ENCODE measurements at regions of chr2 and their contacts with region 1.

Region 1: DNA sequence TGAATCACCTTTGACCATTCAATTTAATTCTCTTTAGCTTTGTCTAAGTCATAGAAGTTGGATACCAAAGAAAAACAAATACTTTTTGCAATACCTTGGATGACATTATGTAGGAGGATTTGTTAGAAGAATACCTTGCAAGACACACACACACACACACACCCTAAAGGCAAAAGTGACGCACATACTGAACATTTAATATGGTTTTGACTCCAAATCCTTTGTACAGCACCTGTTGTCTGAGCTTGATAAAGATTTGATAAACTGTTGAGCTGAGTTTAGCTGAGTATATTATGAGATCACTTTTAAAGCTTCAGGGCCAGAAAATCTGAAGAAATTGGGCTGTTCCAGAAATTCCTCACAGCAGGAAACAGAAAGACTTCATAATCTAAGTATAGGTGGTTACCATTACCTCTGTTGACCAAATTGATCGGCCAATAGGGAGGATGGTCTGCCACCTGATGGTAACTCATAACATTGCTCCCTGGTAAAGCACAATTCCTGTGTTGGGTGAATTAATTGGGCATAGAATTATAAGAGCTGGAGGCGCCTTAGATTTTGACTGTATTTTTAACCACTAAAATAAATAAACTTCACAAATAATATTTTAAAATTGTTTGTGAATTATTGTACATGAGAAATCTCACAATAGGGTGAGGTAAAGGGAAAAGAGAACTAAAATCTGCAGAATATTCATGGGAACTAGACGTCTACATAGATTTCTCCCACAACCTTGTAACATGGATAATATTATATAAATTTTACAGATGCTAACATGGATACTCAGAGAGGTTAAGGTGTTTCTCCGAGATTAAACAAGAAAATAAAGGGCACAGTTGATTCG is 21.9 kb upstream of the RPIA start:
- DNase-seq: no peak
- H3K4me3 ChIP-seq: no peak overlapping the region
- H3K27ac ChIP-seq: no peak overlapping the region
- H3K4me1 ChIP-seq: no peaks in the 10 kb centered on the region; a peak in 1 of 7 replicates
- H3K27me3 ChIP-seq: no peaks in the 10 kb centered on the region
- CTCF ChIP-seq: peak in 2 of 3 experiments; percentile 76 to 78; a peak in 3 of 4 replicates
- EP300 ChIP-seq: no peak
- POLR2A ChIP-seq: no peak
- RAD21 ChIP-seq: peak; percentile 86 to 92

Region 2: GRCh38 chr2:88590998-88591613 is 78.5 kb before region 1 on chr2:
- CTCF ChIA-PET with region 1: interaction called, 306 read pairs
- POLR2A ChIA-PET with region 1: no interaction called
- DNase-seq: no peak
- H3K4me3 ChIP-seq: no peak overlapping the region
- H3K27ac ChIP-seq: no peak overlapping the region
- H3K4me1 ChIP-seq: no peaks in the 10 kb centered on the region
- H3K27me3 ChIP-seq: no peaks in the 10 kb centered on the region
- CTCF ChIP-seq: peak in 2 of 3 experiments; percentile 78 to 83; a peak in 3 of 4 replicates
- EP300 ChIP-seq: no peak
- POLR2A ChIP-seq: no peak
- RAD21 ChIP-seq: peak; percentile 90

Region 3: DNA sequence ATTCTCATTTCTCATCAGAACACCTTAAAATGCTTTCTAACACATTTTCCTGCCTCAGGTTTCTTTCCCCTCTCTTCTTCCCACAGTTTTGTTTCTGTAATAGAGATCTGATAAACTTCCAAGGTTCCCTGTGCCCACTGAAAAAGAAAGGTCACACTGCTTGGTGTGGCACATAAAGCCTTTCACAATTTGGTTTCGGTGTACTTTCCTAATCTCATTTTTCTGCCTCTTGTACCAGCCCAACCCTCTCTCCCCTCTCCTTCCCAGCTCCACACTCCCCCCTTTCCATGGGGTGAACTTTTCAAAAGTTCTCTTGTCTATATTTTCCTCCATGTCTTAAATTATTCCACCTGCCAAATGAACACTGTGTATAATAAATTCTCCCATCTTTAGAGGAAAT is 49.6 kb before region 1 on chr2:
- CTCF ChIA-PET with region 1: interaction called, 45 read pairs
- POLR2A ChIA-PET with region 1: interaction called, 3 read pairs
- DNase-seq: no peak
- H3K4me3 ChIP-seq: no peak overlapping the region
- H3K27ac ChIP-seq: no peak overlapping the region
- H3K4me1 ChIP-seq: peaks cover 0 to 10% (median 8%) of the 10 kb centered on the region in 4 experiments; a peak in 4 of 7 replicates
- H3K27me3 ChIP-seq: no peaks in the 10 kb centered on the region
- CTCF ChIP-seq: no peak
- EP300 ChIP-seq: no peak
- POLR2A ChIP-seq: no peak
- RAD21 ChIP-seq: no peak

Region 4: DNA sequence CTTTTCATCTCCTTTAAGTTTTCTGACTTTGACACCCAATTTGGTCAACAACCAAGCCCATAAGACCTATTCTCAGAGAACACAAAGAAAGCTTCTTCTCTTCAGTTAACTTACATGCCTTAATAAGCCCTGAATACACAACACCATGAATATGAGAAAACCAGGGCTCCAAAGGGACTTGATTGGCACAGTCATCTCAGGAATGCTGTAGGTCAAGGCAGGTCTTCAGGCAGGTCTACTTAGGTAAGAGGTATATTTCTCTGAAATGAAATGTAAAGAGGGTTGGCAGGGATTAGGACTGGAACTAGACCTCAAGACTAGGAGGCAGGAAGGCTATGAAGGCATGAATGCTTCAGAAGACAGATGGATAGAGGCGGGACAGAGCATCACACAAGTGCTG is 17.9 kb before region 1 on chr2:
- CTCF ChIA-PET with region 1: interaction called, 102 read pairs
- POLR2A ChIA-PET with region 1: no interaction called
- DNase-seq: no peak
- H3K4me3 ChIP-seq: no peak overlapping the region
- H3K27ac ChIP-seq: no peak overlapping the region
- H3K4me1 ChIP-seq: no peaks in the 10 kb centered on the region
- H3K27me3 ChIP-seq: no peaks in the 10 kb centered on the region
- CTCF ChIP-seq: no peak
- EP300 ChIP-seq: no peak
- POLR2A ChIP-seq: no peak
- RAD21 ChIP-seq: no peak

Region 5: DNA sequence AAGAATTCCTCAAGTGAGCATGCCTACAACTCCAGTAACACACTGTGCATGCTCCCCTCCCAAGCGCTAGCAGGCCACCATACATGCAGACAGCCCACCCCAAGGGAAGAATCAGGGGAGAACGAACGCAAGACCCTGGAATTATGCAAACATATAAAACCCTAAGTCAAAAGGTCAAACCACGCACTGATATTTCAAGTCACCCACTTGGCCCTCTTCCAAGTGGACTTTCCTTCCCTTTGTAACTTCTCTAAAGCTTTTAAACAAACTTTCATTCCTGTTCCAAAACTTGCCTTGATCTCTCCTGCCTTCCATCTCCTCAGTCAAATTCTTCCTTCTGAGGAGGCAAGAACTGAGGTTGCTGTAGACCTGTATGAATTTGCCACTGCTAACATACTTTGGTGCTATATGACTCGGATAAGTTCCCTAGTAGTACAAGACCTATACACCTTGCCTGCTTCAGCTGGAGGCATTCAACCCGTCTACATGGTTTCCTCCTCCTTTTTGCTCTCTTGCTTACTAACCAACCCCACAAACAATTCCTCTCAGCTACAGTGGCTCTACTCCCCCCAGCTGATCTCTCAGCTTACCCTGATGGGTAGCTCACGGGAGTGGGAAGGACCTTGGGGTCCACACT is 10.8 kb after region 1 on chr2:
- CTCF ChIA-PET with region 1: interaction called, 102 read pairs
- POLR2A ChIA-PET with region 1: no interaction called
- DNase-seq: no peak
- H3K4me3 ChIP-seq: no peak overlapping the region
- H3K27ac ChIP-seq: no peak overlapping the region
- H3K4me1 ChIP-seq: no peaks in the 10 kb centered on the region
- H3K27me3 ChIP-seq: no peaks in the 10 kb centered on the region
- CTCF ChIP-seq: no peak
- EP300 ChIP-seq: no peak
- POLR2A ChIP-seq: no peak
- RAD21 ChIP-seq: no peak

Region 6: DNA sequence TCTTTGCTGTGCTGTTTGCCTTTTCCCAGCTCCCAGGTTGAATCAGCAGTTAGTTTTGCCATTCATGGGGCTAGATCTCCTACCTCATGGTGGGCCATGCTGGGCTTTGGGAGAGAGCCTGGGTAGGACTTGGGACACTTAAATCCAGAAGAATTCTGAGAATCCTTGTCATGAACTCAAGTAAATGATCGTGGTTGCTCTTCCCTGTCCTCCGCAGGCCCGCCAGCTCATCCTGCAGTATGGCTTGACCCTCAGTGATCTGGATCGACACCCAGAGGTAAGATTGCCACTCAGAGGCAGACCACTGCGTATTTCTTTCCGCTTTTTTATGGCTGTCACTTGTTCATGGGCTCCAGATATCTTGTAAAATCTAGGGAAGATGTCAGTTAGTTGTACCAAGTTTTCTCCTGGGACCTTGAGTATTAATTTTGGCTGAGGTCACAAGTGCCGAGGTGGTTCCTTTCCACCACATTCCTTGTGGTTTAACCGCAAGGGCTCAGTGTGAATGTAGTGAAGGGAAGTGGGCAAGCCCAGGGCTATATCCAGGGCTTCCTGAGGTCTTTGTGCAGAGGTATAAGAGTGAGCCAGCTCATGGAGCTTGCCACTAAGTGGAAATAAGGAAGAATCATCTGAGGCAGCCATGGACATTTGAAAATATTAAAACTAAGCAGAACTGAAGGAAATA is 59.6 kb after region 1 on chr2:
- CTCF ChIA-PET with region 1: no interaction called
- POLR2A ChIA-PET with region 1: no interaction called
- DNase-seq: no peak
- H3K4me3 ChIP-seq: no peak overlapping the region
- H3K27ac ChIP-seq: no peak overlapping the region
- H3K4me1 ChIP-seq: no peaks in the 10 kb centered on the region
- H3K27me3 ChIP-seq: no peaks in the 10 kb centered on the region
- CTCF ChIP-seq: no peak
- EP300 ChIP-seq: no peak
- POLR2A ChIP-seq: no peak
- RAD21 ChIP-seq: no peak

Region 7: DNA sequence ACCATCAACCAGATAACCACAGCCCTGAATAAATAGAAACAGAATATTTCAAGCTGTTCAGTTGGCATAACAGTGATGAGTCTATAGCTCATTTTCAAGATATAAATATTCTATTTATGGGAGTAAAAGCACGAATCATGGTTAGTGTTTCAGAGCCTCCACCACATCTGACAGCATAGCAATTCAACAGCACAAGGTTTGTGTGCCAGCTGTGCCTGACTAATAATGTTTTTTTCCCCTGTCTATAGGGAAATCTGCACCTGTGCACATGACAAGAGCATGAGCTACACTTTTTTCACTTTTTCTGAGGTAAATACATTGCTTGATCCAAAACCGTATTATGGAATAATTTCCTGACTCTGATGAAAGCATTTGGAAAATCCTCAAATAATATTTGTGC is 273.2 kb after region 1 on chr2:
- CTCF ChIA-PET with region 1: no interaction called
- POLR2A ChIA-PET with region 1: no interaction called
- DNase-seq: no peak
- H3K4me3 ChIP-seq: no peak overlapping the region
- H3K27ac ChIP-seq: no peak overlapping the region
- H3K4me1 ChIP-seq: no peaks in the 10 kb centered on the region
- H3K27me3 ChIP-seq: no peaks in the 10 kb centered on the region
- CTCF ChIP-seq: no peak
- EP300 ChIP-seq: no peak
- POLR2A ChIP-seq: no peak
- RAD21 ChIP-seq: no peak